Activated CD8-positive, alpha-beta T cell treated with anti-CD3 and anti-CD28 coated beads, Interleukin-2, amount 10 ng/mL, durations not matched to agents 7 days and 5 days (primary cell): ENCODE measurements at regions of chr16 and their contacts with region 1.

Region 1: GRCh38 chr16:30445408-30446202 is at the start of gene SEPHS2:
- DNase-seq: peak; percentile 98
- ATAC-seq: peak; percentile 97
- H3K4me3 Mint-ChIP-seq: peak within 1 kb of the TSS; percentile 90
- H3K27ac Mint-ChIP-seq: peak within 1 kb of the TSS; percentile 94
- H3K4me1 Mint-ChIP-seq: peaks cover 52% of the 10 kb centered on the region
- H3K27me3 Mint-ChIP-seq: no peaks in the 10 kb centered on the region
- total RNA-seq, gene SEPHS2: 64.6 to 68.7 TPM

Region 2: GRCh38 chr16:30458561-30459394 is 13.2 kb after region 1 on chr16:
- CTCF ChIA-PET with region 1: interaction called, 47 read pairs
- POLR2A ChIA-PET with region 1: interaction called, 18 read pairs
- DNase-seq: peak; percentile 95
- ATAC-seq: peak; percentile 97
- H3K4me3 Mint-ChIP-seq: peak overlapping the region; percentile 71
- H3K27ac Mint-ChIP-seq: peak overlapping the region; percentile 98
- H3K4me1 Mint-ChIP-seq: peaks cover 74% of the 10 kb centered on the region
- H3K27me3 Mint-ChIP-seq: no peaks in the 10 kb centered on the region

Region 3: GRCh38 chr16:30472328-30472942 is 26.8 kb after region 1 on chr16 and contains the start of gene ITGAL:
- CTCF ChIA-PET with region 1: interaction called, 139 read pairs
- POLR2A ChIA-PET with region 1: interaction called, 20 read pairs
- DNase-seq: peak; percentile 92
- ATAC-seq: peak; percentile 85
- H3K4me3 Mint-ChIP-seq: peak within 1 kb of the TSS; percentile 98
- H3K27ac Mint-ChIP-seq: peak within 1 kb of the TSS; percentile 96
- H3K4me1 Mint-ChIP-seq: peaks cover 61% of the 10 kb centered on the region
- H3K27me3 Mint-ChIP-seq: no peaks in the 10 kb centered on the region
- total RNA-seq, gene ITGAL: 458 to 471 TPM

Region 4: DNA sequence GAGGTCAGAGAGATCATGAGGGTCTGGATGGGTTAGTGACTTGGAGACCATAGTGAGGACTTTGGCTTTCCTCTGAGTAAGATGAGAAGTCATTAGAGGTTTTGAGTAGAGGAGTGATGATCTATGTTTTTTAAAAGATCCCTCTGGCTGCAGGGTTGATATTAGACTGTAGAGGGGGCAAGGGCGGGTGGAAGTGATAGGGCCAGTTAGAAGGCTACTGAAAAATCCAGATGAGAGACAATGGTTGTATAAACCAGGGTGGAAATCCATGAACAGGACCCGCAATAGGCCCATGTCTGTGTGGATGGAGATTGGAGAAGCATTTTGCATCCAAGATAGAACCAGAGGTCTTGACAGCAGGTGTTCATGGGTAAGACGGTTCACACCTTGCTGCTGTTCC is 36.8 kb after region 1 on chr16:
- CTCF ChIA-PET with region 1: interaction called, 139 read pairs
- POLR2A ChIA-PET with region 1: interaction called, 20 read pairs
- DNase-seq: no peak
- ATAC-seq: no peak
- H3K4me3 Mint-ChIP-seq: no peak overlapping the region
- H3K27ac Mint-ChIP-seq: peak overlapping the region; percentile 40
- H3K4me1 Mint-ChIP-seq: peaks cover 63% of the 10 kb centered on the region
- H3K27me3 Mint-ChIP-seq: no peaks in the 10 kb centered on the region

Region 5: GRCh38 chr16:30499284-30499683 is 53.7 kb after region 1 on chr16:
- CTCF ChIA-PET with region 1: interaction called, 11 read pairs
- POLR2A ChIA-PET with region 1: interaction called, 3 read pairs
- DNase-seq: no peak
- ATAC-seq: no peak
- H3K4me3 Mint-ChIP-seq: no peak overlapping the region
- H3K27ac Mint-ChIP-seq: peak overlapping the region; percentile 14
- H3K4me1 Mint-ChIP-seq: peaks cover 11% of the 10 kb centered on the region
- H3K27me3 Mint-ChIP-seq: no peaks in the 10 kb centered on the region